PC-3 (cell line): ENCODE measurements at regions of chr11 and their contacts with region 1.

Region 1: GRCh38 chr11:122202951-122203456 is 87.0 kb upstream of the BLID start:
- DNase-seq: peak; percentile 95
- ATAC-seq: peak; percentile 72
- H3K4me3 ChIP-seq: peak overlapping the region; percentile 70
- H3K27ac ChIP-seq: peak overlapping the region; percentile 94
- H3K4me1 ChIP-seq: peaks cover 40% of the 10 kb centered on the region
- H3K27me3 ChIP-seq: no peaks in the 10 kb centered on the region
- CTCF ChIP-seq: peak; percentile 99

Region 2: DNA sequence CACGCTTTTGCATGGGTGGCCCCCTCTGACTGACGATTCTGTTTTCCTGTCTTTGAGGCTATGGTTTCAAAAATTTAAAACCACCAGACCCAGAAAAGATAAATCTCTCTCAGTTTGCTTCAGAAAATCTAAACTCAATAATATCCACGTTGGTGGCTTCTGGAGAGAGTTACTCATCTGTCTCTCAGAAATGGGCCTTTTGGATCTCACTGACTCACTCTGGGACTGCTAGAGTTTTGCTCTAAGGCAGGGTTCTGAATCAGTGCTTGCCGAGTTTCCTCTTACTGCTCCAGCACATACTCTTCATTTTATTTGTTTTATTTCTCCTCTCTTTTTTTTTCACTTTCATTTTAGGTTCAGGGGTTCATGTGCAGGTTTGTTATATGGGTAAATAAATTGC is 392.7 kb before region 1 on chr11:
- CTCF ChIA-PET with region 1: no interaction called
- POLR2A ChIA-PET with region 1: no interaction called
- intact Hi-C with region 1: loop called (anchors 10 kb)
- DNase-seq: peak; percentile 73
- ATAC-seq: peak; percentile 90
- H3K4me3 ChIP-seq: no peak overlapping the region
- H3K27ac ChIP-seq: peak overlapping the region; percentile 41
- H3K4me1 ChIP-seq: peaks cover 15% of the 10 kb centered on the region
- H3K27me3 ChIP-seq: no peaks in the 10 kb centered on the region
- CTCF ChIP-seq: no peak

Region 3: DNA sequence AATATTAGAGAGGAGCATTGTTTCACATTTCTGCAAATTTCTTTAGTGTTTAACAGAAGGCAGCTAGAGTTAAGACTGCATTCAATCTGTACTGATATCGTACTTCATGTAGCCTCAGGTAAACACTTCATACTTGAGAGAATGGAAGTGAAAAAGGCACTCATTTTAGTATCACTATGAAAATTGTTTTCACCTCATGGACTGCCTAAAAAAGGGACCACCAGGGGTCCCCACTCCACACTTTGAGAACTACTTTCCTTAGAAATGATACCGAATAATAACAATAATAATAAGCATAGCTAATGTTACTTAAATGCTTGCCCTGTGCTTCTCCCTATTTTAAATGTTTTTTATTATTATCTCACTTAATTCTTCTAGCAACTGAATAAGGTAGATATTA is 182.1 kb before region 1 on chr11:
- CTCF ChIA-PET with region 1: no interaction called
- POLR2A ChIA-PET with region 1: no interaction called
- intact Hi-C with region 1: loop called (anchors 1 kb)
- DNase-seq: peak; percentile 46
- ATAC-seq: peak; percentile 18; the same call in 1 of the 2 replicates
- H3K4me3 ChIP-seq: no peak overlapping the region
- H3K27ac ChIP-seq: no peak overlapping the region
- H3K4me1 ChIP-seq: 0 out of 2 replicates have a peak, but pooled peaks cover 7% of the 10 kb centered on the region
- H3K27me3 ChIP-seq: no peaks in the 10 kb centered on the region
- CTCF ChIP-seq: peak; percentile 70

Region 4: GRCh38 chr11:122108192-122108799 is 94.7 kb before region 1 on chr11:
- CTCF ChIA-PET with region 1: no interaction called
- POLR2A ChIA-PET with region 1: no interaction called
- intact Hi-C with region 1: no loop called
- DNase-seq: peak; percentile 81
- ATAC-seq: no peak
- H3K4me3 ChIP-seq: no peak overlapping the region
- H3K27ac ChIP-seq: no peak overlapping the region
- H3K4me1 ChIP-seq: peaks cover 48% of the 10 kb centered on the region
- H3K27me3 ChIP-seq: no peaks in the 10 kb centered on the region
- CTCF ChIP-seq: peak; percentile 96

Region 5: DNA sequence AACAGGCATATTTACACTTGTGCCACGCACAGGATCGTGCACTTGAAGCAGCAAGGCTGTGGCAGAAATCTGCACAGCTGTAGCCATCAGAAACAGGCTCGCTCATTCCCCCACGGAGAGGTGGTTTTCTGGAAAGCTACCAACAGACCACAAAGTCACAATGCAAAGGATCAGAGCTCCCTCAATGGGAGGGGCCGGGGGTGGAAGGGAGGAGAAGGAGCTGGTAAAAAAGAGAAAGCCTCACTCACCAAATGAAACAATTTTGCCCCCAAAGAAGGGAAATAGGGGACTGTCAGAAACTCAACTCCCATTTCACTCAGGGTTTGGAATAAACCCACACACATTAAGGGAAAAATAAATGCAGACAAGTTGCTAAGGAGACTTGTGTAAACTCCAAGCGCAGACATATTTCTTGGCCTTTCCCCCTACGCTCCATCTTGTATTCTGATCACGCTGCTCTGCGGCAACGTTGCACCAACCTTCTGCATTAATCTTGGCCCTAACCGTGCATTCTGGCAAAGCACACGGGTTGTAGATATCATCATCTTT is 43.8 kb before region 1 on chr11:
- CTCF ChIA-PET with region 1: no interaction called
- POLR2A ChIA-PET with region 1: interaction called, 4 read pairs
- intact Hi-C with region 1: loop called (anchors 1 kb)
- DNase-seq: peak; percentile 75
- ATAC-seq: peak; percentile 14
- H3K4me3 ChIP-seq: peak overlapping the region; percentile 75
- H3K27ac ChIP-seq: peak overlapping the region; percentile 99
- H3K4me1 ChIP-seq: peaks cover 70% of the 10 kb centered on the region
- H3K27me3 ChIP-seq: no peaks in the 10 kb centered on the region
- CTCF ChIP-seq: no peak

Region 6: DNA sequence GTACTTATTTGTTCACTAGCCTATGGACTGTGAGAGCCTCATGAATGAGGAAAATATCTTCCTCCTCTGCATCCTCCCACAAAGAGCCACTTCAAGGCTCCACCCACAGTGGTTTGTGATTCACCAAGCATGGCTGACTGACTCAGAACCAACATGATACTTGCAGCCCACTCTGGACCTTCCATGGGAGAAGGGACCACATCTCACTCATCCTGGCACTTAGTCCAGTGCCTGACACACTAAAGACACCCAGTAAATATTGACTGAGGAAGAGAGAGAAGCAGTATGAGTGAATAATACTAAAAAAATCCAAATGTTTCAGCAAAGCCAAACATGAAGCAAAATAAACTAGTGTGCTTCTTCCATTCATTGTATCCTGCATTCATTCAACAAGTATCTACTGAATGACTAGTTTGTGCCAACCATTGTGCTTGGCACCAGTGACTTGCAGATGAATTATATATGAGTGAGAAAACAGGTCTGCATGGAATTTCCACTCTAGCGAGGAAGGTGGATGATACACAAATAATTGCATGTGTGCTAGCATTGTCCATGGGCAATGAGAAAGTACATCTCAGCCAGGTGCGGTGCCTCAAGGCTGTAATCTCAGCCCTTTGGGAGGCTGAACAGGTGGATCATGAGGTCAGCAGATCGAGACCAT is 32.1 kb before region 1 on chr11:
- CTCF ChIA-PET with region 1: no interaction called
- POLR2A ChIA-PET with region 1: no interaction called
- intact Hi-C with region 1: loop called (anchors 2 kb)
- DNase-seq: peak; percentile 99
- ATAC-seq: peak; percentile 69
- H3K4me3 ChIP-seq: peak overlapping the region; percentile 48
- H3K27ac ChIP-seq: peak overlapping the region; percentile 99
- H3K4me1 ChIP-seq: peaks cover 89% of the 10 kb centered on the region
- H3K27me3 ChIP-seq: no peaks in the 10 kb centered on the region
- CTCF ChIP-seq: no peak